ENCODE measurements at regions of chr9 and their contacts with region 1.

Region 1: GRCh38 chr9:124658165-124659017 is 112.7 kb downstream of the NR6A1 start:
- DNase-seq: peak; percentile 76
- ATAC-seq: peak; percentile 73
- H3K4me3 ChIP-seq: peak overlapping the region; percentile 55 to 73 (median 69)
- H3K27ac ChIP-seq: peak overlapping the region; percentile 94
- H3K4me1 ChIP-seq: peaks cover 63% of the 10 kb centered on the region
- H3K27me3 ChIP-seq: no peaks in the 10 kb centered on the region
- CTCF ChIP-seq: no peak
- EP300 ChIP-seq: 0 out of 4 replicates have a peak, but pooled peaks of 1 of the 2 experiments have one; percentile 3
- POLR2A ChIP-seq: peak; percentile 45 to 86; a peak in 3 of 4 replicates
- RAD21 ChIP-seq: no peak

Region 2: DNA sequence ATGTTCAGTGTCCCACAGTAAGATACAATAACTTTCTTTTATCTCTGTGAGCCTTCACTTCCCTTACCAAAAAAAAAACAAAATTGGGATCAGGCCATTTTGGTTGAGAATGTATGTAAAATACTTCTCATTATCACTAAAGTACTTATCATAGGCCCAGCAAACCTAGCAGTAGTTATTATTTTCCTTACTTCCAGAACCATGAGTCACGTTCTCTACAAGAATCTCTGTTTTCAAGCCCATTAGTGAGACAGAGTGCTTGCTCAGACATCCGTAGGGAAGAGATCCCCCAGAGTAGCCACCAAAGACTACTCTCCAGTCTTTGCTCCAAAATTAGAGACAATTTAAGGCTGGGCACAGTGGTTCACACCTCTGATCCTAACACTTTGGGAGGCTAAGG is 47.3 kb before region 1 on chr9:
- CTCF ChIA-PET with region 1: no interaction called
- POLR2A ChIA-PET with region 1: no interaction called
- in situ Hi-C with region 1: no loop called
- intact Hi-C with region 1: no loop called
- DNase-seq: no peak
- ATAC-seq: no peak
- H3K4me3 ChIP-seq: no peak overlapping the region
- H3K27ac ChIP-seq: no peak overlapping the region
- H3K4me1 ChIP-seq: peaks cover 10% of the 10 kb centered on the region
- H3K27me3 ChIP-seq: no peaks in the 10 kb centered on the region
- CTCF ChIP-seq: no peak
- EP300 ChIP-seq: no peak
- POLR2A ChIP-seq: no peak
- RAD21 ChIP-seq: no peak

Region 3: DNA sequence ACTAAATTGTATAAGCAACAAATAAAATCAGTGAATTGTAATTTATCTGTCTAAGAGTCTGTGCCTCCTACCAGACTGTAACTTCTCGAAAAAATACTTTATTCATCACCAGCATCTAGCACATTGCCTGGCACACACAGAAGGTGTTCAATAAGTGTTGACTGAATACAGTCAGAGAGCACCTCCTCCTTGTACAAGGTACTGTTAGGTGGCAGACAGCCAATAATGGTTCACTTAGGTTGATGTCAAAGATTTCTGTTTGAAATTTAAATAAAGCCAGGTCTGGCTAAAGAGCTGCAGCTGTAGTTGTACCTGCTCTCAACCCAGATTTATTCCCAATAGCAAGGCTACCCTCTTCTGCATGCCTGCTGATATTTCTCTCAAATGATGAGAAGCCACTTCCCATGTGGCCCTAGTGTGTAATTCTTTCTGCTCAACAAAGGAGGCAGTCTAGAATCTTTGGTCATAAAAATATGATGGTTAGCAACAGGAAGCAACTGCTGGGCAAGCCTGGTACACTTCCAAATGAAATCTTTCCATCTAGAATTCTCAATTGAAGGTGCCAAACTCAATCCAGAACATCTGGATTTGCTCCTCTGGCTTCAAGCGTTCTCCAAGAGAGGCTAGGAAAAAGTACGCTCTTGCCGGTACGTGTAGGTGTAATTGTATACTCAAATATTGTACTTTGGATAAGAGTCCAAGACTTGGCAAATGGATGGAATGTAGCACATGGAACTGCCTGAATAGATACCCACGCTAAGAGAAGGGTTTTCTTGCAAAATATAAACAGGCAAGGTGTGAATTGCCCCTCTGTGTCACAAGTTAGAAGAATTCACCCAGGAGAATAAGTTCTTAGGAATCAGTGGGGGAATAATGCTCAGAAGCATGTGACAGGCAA is 17.1 kb after region 1 on chr9:
- CTCF ChIA-PET with region 1: no interaction called
- POLR2A ChIA-PET with region 1: interaction called, 5 read pairs
- in situ Hi-C with region 1: no loop called
- intact Hi-C with region 1: loop called (anchors 1 kb)
- DNase-seq: no peak
- ATAC-seq: no peak
- H3K4me3 ChIP-seq: no peak overlapping the region
- H3K27ac ChIP-seq: no peak overlapping the region
- H3K4me1 ChIP-seq: peaks cover 41% of the 10 kb centered on the region
- H3K27me3 ChIP-seq: no peaks in the 10 kb centered on the region
- CTCF ChIP-seq: no peak
- EP300 ChIP-seq: no peak
- POLR2A ChIP-seq: no peak
- RAD21 ChIP-seq: no peak

Region 4: DNA sequence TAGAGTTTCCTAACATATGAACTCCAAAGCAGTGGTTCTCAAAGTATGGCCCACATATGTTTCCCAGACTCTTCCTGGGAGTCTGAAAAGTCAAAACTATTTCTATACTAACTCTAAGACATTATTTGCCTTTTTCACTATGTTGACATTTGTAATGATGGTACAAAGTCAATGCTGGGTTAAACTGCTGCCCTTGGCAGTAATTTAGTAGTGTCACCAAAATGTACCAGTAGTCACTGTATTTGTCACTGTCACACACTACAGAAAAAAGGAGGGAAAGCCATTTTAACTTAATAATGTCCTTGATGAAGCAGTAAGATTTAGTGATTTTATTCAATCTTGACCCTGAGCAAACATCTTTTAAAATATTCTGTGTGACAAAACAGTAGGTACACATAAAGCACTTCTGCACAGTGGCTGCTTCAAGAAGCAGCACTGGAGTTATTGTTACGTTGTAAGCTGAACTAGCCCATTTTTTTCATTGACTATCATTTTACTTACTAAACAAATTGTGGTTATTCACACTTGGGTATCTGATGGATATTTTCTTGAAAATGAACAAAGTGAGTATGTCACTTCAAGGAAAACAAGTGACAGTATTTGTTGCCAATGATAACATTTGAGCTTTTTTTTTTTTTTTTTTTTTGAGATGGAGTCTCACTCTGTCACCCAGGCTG is 22.5 kb after region 1 on chr9:
- CTCF ChIA-PET with region 1: no interaction called
- POLR2A ChIA-PET with region 1: interaction called, 5 read pairs
- in situ Hi-C with region 1: no loop called
- intact Hi-C with region 1: loop called (anchors 1 kb)
- DNase-seq: peak; percentile 40
- ATAC-seq: peak; percentile 83
- H3K4me3 ChIP-seq: no peak overlapping the region; a peak in 1 of 6 replicates
- H3K27ac ChIP-seq: peak overlapping the region; percentile 70
- H3K4me1 ChIP-seq: peaks cover 37% of the 10 kb centered on the region
- H3K27me3 ChIP-seq: no peaks in the 10 kb centered on the region
- CTCF ChIP-seq: no peak
- EP300 ChIP-seq: no peak
- POLR2A ChIP-seq: no peak
- RAD21 ChIP-seq: no peak

Region 5: GRCh38 chr9:124839612-124840299 is 181.4 kb after region 1 on chr9:
- CTCF ChIA-PET with region 1: no interaction called
- POLR2A ChIA-PET with region 1: no interaction called
- in situ Hi-C with region 1: no loop called
- intact Hi-C with region 1: no loop called
- DNase-seq: peak; percentile 43
- ATAC-seq: peak; percentile 73
- H3K4me3 ChIP-seq: peak overlapping the region in 1 of 3 experiments; percentile 60; a peak in 1 of 6 replicates
- H3K27ac ChIP-seq: no peak overlapping the region
- H3K4me1 ChIP-seq: peaks cover 34% of the 10 kb centered on the region
- H3K27me3 ChIP-seq: peaks cover 0 to 6% of the 10 kb centered on the region in 2 experiments; a peak in 2 of 5 replicates
- CTCF ChIP-seq: peak; percentile 58
- EP300 ChIP-seq: no peak
- POLR2A ChIP-seq: no peak
- RAD21 ChIP-seq: no peak

Measured in HepG2 (cell line).